A549 (cell line): ENCODE measurements at regions of chr17 and their contacts with region 1.

Region 1: GRCh38 chr17:48047741-48048383 is at the start of gene NFE2L1:
- DNase-seq: peak; percentile 98 to 100
- ATAC-seq: peak; percentile 90 to 95
- H3K4me3 ChIP-seq: peak within 1 kb of the TSS; percentile 79
- H3K27ac ChIP-seq: peak within 1 kb of the TSS; percentile 95 to 99
- H3K4me1 ChIP-seq: peaks cover 52% of the 10 kb centered on the region
- CTCF ChIP-seq: no peak
- EP300 ChIP-seq: no peak
- POLR2A ChIP-seq: peak; percentile 61
- RAD21 ChIP-seq: no peak
- polyA plus RNA-seq, gene NFE2L1: 241 and 283 TPM in 2 replicates

Region 2: GRCh38 chr17:48037036-48037837 is 10.6 kb before region 1 on chr17 and contains the start of gene COPZ2:
- CTCF ChIA-PET with region 1: interaction called, 1,398 read pairs
- POLR2A ChIA-PET with region 1: interaction called, 9 read pairs
- DNase-seq: peak; percentile 71 to 85
- ATAC-seq: peak; percentile 94 to 95
- H3K4me3 ChIP-seq: peak within 1 kb of the TSS; percentile 63
- H3K27ac ChIP-seq: peak within 1 kb of the TSS; percentile 74 to 91
- H3K4me1 ChIP-seq: 0 out of 3 replicates have a peak, but pooled peaks cover 3% of the 10 kb centered on the region
- CTCF ChIP-seq: peak; percentile 70
- EP300 ChIP-seq: no peak
- POLR2A ChIP-seq: peak; percentile 28
- RAD21 ChIP-seq: 0 out of 5 replicates have a peak, but pooled peaks have one; percentile 17 to 36
- polyA plus RNA-seq, gene COPZ2: 19.1 and 19.3 TPM in 2 replicates

Region 3: GRCh38 chr17:48068491-48068961 is 20.7 kb after region 1 on chr17:
- CTCF ChIA-PET with region 1: interaction called, 1,398 read pairs
- POLR2A ChIA-PET with region 1: interaction called, 34 read pairs
- DNase-seq: peak; percentile 65 to 76
- ATAC-seq: peak; percentile 90 to 94
- H3K4me3 ChIP-seq: no peak overlapping the region
- H3K27ac ChIP-seq: no peak overlapping the region
- H3K4me1 ChIP-seq: no peaks in the 10 kb centered on the region
- CTCF ChIP-seq: no peak
- EP300 ChIP-seq: no peak
- POLR2A ChIP-seq: no peak
- RAD21 ChIP-seq: 0 out of 5 replicates have a peak, but pooled peaks of 1 of the 2 experiments have one; percentile 18

Region 4: DNA sequence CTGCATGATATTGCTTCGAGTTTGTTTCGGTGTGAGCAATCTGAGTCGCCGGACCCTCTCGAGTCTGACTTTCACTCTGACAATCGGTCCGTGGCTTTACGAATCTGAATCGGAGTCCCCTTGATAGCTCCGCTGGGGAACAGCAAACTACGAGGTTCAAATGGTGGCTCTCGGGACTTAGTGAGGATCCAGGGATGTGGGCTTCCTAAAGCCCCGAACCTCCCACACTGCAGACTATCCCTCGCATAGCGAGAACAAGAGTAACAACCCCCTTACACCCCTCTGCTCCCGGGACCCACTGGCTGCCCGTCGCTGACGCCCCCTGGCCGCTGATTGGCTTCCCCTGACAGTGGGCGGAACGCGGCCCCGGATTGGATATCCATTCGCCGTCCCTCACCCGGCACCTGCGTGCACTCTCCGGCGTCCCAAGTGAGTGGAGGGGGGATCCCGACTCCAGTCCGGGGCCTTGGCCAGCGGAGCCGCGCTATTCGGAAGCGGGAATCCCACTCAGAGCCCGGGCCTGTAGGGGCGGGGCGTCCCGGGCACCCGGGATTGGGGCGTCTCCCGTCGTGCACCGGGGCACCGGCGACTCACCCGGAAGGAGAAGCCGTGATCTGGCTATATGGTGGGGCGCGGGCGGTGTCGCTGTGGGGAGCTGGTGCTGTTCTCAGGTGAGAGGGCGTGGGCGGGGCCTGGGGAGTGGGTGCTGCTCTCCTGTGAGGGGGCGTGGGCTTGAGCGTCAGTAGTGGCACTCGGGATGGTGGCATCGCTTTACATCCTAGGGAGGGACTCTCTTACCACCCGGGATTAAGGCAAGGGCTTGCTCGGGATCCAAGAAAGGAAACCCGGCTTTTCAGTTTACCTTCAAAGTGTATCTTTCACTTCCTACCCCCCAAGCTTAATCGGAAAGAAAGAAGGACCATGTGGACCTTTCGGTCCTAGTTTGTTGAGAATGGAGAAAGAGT is 59.6 kb after region 1 on chr17 and contains the start of gene SNX11:
- CTCF ChIA-PET with region 1: interaction called, 4 read pairs
- POLR2A ChIA-PET with region 1: interaction called, 18 read pairs
- DNase-seq: peak; percentile 90 to 93
- ATAC-seq: peak; percentile 97 to 99
- H3K4me3 ChIP-seq: peak within 1 kb of the TSS; percentile 76
- H3K27ac ChIP-seq: peak within 1 kb of the TSS; percentile 91 to 92
- H3K4me1 ChIP-seq: peaks cover 9% of the 10 kb centered on the region
- CTCF ChIP-seq: no peak
- EP300 ChIP-seq: no peak
- POLR2A ChIP-seq: peak; percentile 78
- RAD21 ChIP-seq: no peak
- polyA plus RNA-seq, gene SNX11: 28.4 and 30.9 TPM in 2 replicates

Region 5: DNA sequence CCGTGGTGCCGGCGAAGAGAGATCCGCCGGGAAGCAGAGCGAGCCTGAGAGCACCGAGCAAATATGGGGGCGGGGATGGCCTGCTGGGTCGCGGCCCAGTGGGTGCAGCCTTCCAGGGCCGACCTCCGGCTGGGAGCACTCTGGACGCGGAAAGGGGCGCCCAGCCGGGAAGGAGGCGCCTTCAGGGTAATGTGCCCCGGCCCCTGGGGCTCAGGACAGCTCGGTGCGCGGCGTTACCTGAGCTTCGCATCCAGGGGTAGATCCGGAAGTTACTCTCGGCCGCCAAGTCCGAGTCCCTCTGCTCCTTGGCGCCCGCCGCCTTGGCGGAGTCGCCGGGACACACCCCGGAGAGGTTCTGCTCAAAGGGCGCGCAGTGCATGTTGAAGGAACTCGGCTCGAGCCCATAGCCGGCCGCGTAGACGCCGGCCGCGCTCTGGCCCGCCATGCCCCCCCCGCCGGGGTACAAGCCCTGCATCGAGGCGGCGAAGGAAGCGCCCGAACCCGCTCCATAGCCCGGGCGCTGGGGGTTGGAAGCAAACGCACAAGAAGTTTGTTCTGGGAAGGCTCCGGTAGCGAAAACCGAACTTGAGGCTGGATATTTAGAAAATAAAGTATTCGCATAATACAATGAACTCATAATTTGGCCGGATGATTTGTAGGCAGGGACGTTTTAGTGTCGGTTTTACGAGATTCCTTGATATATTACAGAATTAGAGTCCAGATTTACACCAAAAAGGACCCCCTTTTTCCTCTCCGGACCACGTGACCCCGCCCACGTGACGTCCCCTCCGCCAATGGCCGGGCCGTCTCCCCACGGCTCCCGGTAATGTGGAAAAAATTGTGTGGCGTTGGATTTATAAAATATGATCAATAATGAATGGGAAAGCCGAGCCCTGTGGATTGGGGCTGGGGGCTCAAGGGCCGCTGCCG is 562.7 kb after region 1 on chr17 and contains the start of gene HOXB7:
- CTCF ChIA-PET with region 1: no interaction called
- POLR2A ChIA-PET with region 1: interaction called, 10 read pairs
- DNase-seq: peak; percentile 75 to 91
- ATAC-seq: peak; percentile 11 to 59; a peak in 3 of 6 replicates
- H3K4me3 ChIP-seq: peak within 1 kb of the TSS; percentile 74
- H3K27ac ChIP-seq: peak within 1 kb of the TSS; percentile 93 to 99
- H3K4me1 ChIP-seq: peaks cover 16% of the 10 kb centered on the region
- CTCF ChIP-seq: no peak
- EP300 ChIP-seq: no peak
- POLR2A ChIP-seq: peak; percentile 66
- RAD21 ChIP-seq: no peak
- polyA plus RNA-seq, gene HOXB7: 15.4 and 22.3 TPM in 2 replicates